ENCODE measurements at regions of chr4 and their contacts with region 1.

Region 1: DNA sequence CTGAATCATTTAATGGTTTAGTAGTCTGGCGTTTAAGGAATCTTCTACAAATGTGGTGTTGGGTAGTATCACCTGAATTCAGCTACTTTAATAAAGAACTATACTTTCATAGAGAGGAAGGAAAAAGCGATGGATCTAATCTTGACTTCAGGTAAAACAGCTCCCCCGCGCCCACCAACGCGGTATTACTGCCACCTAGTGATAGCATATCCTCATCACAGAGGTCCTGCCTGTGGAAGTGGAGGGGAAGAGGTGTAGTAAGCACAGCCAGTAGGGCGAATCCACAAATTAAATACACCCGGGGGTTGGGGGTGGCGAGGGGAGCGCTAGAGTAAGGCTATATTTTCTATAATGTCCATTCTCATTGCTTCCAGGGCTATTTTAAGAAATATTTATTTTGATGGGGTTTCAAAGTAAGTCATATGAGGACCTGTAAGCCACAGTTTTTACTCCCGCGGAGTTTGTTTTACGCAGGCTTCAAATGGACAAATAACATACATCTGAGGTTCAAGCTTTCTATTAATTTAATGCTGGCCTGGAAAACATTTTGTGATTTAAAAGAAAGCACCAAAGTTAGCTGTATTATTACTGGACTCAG is 8.3 kb upstream of the DAPP1 start:
- DNase-seq: peak; percentile 69 to 76 (median 70)
- H3K4me3 ChIP-seq: no peak overlapping the region
- H3K4me3 Mint-ChIP-seq: peak overlapping the region in 1 of 8 donors; percentile 62
- H3K27ac ChIP-seq: no peak overlapping the region
- H3K27ac Mint-ChIP-seq: no peak overlapping the region
- H3K4me1 ChIP-seq: no peaks in the 10 kb centered on the region
- H3K4me1 Mint-ChIP-seq: peaks cover 5 to 6% (median 5%) of the 10 kb centered on the region in 4 donors
- H3K27me3 ChIP-seq: no peaks in the 10 kb centered on the region
- H3K27me3 Mint-ChIP-seq: peaks cover 4 to 5% of the 10 kb centered on the region in 2 donors

Region 2: DNA sequence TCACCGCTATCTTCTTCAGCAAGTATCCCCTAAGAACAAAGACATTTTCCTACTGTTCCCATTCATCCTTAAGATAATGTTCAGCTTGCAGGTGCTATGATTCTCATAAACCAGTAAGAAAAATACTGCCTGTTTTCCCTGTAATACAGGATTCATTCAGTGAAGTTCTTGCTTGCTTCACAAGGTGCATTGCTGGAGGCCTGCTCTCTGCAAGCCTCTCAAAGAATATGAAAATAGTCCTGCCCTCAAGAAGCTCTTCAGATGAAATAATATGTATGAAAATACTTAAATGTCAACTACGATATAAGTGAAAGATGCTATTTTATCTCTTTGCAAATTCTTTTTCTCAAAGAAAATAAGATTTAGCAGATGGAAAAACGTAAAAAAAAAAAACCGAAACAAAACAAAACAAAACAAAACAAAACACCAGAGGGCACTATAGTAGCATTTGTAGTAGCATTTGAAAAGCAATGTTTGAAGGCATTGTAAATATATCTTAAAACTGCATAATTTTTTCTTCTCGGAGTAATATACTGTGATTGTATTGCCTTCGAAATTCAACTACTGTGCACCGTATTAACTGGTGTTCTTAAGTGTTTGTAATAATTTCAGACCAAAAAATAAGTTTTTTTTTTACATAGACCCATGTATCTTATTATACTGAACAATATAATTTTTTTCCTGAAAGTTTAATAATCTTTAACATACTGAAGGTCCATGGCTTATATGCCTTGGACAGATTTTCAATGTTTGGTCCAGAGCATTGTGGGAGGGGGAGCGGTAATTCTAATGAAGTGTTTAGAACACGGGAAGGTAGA is 690.3 kb before region 1 on chr4:
- CTCF ChIA-PET with region 1: interaction called, 9 read pairs
- POLR2A ChIA-PET with region 1: no interaction called
- intact Hi-C with region 1: loop called (anchors 1 kb)
- DNase-seq: peak in 2 of 5 donors; percentile 4 to 7
- H3K4me3 ChIP-seq: no peak overlapping the region
- H3K4me3 Mint-ChIP-seq: no peak overlapping the region
- H3K27ac ChIP-seq: no peak overlapping the region
- H3K27ac Mint-ChIP-seq: no peak overlapping the region
- H3K4me1 ChIP-seq: no peaks in the 10 kb centered on the region
- H3K4me1 Mint-ChIP-seq: no peaks in the 10 kb centered on the region
- H3K27me3 ChIP-seq: no peaks in the 10 kb centered on the region
- H3K27me3 Mint-ChIP-seq: peaks cover 0 to 1% of the 10 kb centered on the region in 2 donors

Region 3: DNA sequence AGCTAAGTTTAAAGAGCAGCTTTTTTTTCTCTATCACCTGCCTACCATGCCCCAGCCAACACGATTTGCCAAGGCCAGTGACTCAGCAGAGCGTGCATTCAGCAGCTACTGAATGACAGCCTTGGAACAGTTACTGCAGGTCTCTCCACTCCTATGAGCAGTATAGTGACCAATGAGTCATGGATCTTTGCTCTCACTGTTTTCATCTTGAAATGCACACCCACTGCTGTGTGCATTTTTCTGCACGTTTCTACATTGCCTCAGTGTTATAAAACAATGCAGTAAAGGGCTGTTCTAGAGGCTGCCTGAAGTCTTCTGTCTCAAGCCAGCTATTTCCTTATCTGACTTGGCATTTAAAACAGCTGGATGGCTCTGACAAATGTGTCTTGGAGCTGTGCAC is 84.7 kb before region 1 on chr4:
- CTCF ChIA-PET with region 1: no interaction called
- POLR2A ChIA-PET with region 1: no interaction called
- intact Hi-C with region 1: no loop called
- DNase-seq: no peak
- H3K4me3 ChIP-seq: no peak overlapping the region
- H3K4me3 Mint-ChIP-seq: no peak overlapping the region
- H3K27ac ChIP-seq: no peak overlapping the region
- H3K27ac Mint-ChIP-seq: no peak overlapping the region
- H3K4me1 ChIP-seq: no peaks in the 10 kb centered on the region
- H3K4me1 Mint-ChIP-seq: peaks cover 0 to 2% (median 0%) of the 10 kb centered on the region in 4 donors
- H3K27me3 ChIP-seq: no peaks in the 10 kb centered on the region
- H3K27me3 Mint-ChIP-seq: peaks cover 4 to 13% of the 10 kb centered on the region in 2 donors

Region 4: DNA sequence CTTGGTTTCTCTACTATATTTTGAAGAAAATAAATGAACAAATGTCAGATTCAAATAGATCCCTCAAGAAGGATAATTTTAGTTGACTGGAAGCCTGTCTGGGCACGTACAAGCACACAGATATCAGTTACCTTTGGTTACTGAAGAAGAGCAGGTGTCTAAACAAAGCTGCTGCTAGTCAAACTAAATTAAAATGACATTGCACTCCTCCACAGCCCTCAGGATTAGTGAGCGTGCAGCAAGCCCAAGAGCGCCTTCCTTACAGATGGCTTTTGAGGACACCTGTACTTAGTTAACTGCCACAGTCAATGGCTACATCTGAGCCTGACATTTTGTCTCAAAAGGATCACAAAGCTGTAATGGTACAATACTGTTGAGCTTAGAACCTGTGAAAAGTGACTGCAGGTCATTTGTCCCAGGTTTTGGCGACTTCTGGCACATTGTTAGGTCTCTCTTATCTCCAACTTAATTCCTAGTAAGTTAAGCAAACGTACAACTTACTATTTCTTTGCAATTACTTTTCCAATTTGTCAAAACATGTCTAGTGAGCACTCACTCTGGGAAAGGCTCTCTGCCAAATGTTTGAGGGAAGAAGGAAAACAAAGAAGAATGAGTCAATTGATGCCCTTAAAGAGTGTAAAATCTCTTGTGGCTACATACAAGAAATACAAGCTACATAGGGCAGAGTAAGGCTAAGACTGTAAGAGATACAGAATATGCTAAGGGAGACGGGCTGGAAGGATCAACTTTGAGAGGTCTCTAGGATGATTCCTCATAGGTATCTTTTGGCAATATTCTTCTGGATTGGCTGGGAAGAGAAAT is 17.4 kb before region 1 on chr4:
- CTCF ChIA-PET with region 1: interaction called, 24 read pairs
- POLR2A ChIA-PET with region 1: no interaction called
- intact Hi-C with region 1: no loop called
- DNase-seq: no peak
- H3K4me3 ChIP-seq: no peak overlapping the region
- H3K4me3 Mint-ChIP-seq: no peak overlapping the region
- H3K27ac ChIP-seq: no peak overlapping the region
- H3K27ac Mint-ChIP-seq: no peak overlapping the region
- H3K4me1 ChIP-seq: no peaks in the 10 kb centered on the region
- H3K4me1 Mint-ChIP-seq: no peaks in the 10 kb centered on the region
- H3K27me3 ChIP-seq: no peaks in the 10 kb centered on the region
- H3K27me3 Mint-ChIP-seq: peaks cover 9 to 33% of the 10 kb centered on the region in 2 donors

Region 5: GRCh38 chr4:99827454-99827853 is 19.1 kb after region 1 on chr4:
- CTCF ChIA-PET with region 1: interaction called, 23 read pairs
- POLR2A ChIA-PET with region 1: no interaction called
- intact Hi-C with region 1: no loop called
- DNase-seq: no peak
- H3K4me3 ChIP-seq: no peak overlapping the region
- H3K4me3 Mint-ChIP-seq: no peak overlapping the region
- H3K27ac ChIP-seq: no peak overlapping the region
- H3K27ac Mint-ChIP-seq: peak overlapping the region in 2 of 7 donors; percentile 16 to 58
- H3K4me1 ChIP-seq: peaks cover 13% of the 10 kb centered on the region
- H3K4me1 Mint-ChIP-seq: peaks cover 43 to 58% (median 49%) of the 10 kb centered on the region in 4 donors
- H3K27me3 ChIP-seq: no peaks in the 10 kb centered on the region
- H3K27me3 Mint-ChIP-seq: no peaks in the 10 kb centered on the region

Region 6: DNA sequence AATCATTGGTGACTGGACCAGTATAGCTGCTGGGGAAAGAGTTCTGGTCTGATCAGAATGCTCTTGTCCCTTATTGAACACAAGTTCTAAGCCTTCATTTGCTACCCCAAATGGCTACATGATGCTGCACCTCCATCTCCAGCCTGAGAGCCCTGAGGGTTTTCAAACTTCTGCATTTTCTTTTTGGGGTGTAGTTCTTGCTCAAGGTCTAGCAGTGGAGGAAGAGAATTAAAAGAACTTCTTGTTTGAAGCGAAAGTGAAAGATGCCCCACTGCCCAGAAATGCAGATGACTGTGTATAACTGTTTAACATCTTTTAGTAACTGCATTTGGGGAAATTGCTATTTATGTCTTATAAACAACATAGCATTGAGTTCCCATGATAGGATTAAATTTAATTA is 47.3 kb after region 1 on chr4:
- CTCF ChIA-PET with region 1: interaction called, 19 read pairs
- POLR2A ChIA-PET with region 1: no interaction called
- intact Hi-C with region 1: no loop called
- DNase-seq: no peak
- H3K4me3 ChIP-seq: no peak overlapping the region
- H3K4me3 Mint-ChIP-seq: peak overlapping the region in 7 of 8 donors; percentile 47 to 75 (median 67)
- H3K27ac ChIP-seq: peak overlapping the region; percentile 32
- H3K27ac Mint-ChIP-seq: peak overlapping the region; percentile 61 to 86 (median 71)
- H3K4me1 ChIP-seq: peaks cover 45% of the 10 kb centered on the region
- H3K4me1 Mint-ChIP-seq: peaks cover 30 to 50% (median 40%) of the 10 kb centered on the region in 4 donors
- H3K27me3 ChIP-seq: no peaks in the 10 kb centered on the region
- H3K27me3 Mint-ChIP-seq: no peaks in the 10 kb centered on the region

Region 7: GRCh38 chr4:100286636-100287035 is 478.3 kb after region 1 on chr4:
- CTCF ChIA-PET with region 1: no interaction called
- POLR2A ChIA-PET with region 1: no interaction called
- intact Hi-C with region 1: no loop called
- DNase-seq: no peak
- H3K4me3 ChIP-seq: no peak overlapping the region
- H3K4me3 Mint-ChIP-seq: no peak overlapping the region
- H3K27ac ChIP-seq: no peak overlapping the region
- H3K27ac Mint-ChIP-seq: no peak overlapping the region
- H3K4me1 ChIP-seq: no peaks in the 10 kb centered on the region
- H3K4me1 Mint-ChIP-seq: no peaks in the 10 kb centered on the region
- H3K27me3 ChIP-seq: no peaks in the 10 kb centered on the region
- H3K27me3 Mint-ChIP-seq: peaks cover 3 to 10% of the 10 kb centered on the region in 2 donors

Measured in CD4-positive, alpha-beta memory T cell (primary cell).